ENCODE measurements at regions of chr20 and their contacts with region 1.

Region 1: DNA sequence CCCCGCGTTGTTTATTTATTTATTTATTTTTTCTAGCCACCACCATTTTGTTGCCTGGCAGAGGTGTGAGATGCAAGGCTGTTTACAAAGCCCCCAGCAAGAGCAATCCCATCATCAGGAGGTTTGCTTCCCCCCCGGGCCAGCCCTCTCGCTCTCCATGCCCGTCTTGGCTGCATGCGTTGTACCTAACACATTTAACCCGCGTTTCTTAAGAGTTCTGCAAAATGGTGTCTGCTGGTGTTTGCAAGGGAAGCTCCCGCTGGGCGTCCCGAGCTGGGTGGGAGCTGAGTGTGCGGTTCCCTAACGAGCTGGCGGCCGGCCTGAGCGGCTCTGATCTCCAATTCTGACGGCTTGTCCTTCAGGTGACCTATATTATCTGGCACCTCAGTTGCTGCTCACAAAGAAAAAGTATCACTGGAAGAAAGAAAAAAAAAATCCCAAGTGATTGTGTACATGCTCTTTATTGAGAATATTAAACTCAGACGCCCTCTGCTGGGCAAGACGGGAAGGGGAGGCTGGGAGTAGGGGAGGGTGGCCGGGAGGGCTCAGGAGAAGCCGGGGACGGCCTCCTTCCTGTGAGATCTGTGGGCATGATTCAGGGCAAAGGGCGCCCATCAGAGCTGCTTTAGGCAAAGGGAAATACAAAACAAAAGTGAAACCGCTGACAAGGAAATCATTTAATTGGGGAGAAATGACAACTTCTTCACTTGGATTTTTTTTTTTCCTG is 154.8 kb downstream of the BCAS1 start:
- DNase-seq: peak; percentile 91
- ATAC-seq: peak; percentile 94
- H3K4me3 ChIP-seq: peak overlapping the region; percentile 69 to 83 (median 74)
- H3K4me3 Mint-ChIP-seq: peak overlapping the region; percentile 94
- H3K27ac ChIP-seq: peak overlapping the region; percentile 45 to 68
- H3K27ac Mint-ChIP-seq: peak overlapping the region; percentile 90
- H3K4me1 ChIP-seq: peaks cover 17 to 38% of the 10 kb centered on the region in 2 donors
- H3K4me1 Mint-ChIP-seq: peaks cover 40% of the 10 kb centered on the region
- H3K27me3 ChIP-seq: no peaks in the 10 kb centered on the region
- H3K27me3 Mint-ChIP-seq: no peaks in the 10 kb centered on the region
- CTCF ChIP-seq: peak; percentile 86

Region 2: DNA sequence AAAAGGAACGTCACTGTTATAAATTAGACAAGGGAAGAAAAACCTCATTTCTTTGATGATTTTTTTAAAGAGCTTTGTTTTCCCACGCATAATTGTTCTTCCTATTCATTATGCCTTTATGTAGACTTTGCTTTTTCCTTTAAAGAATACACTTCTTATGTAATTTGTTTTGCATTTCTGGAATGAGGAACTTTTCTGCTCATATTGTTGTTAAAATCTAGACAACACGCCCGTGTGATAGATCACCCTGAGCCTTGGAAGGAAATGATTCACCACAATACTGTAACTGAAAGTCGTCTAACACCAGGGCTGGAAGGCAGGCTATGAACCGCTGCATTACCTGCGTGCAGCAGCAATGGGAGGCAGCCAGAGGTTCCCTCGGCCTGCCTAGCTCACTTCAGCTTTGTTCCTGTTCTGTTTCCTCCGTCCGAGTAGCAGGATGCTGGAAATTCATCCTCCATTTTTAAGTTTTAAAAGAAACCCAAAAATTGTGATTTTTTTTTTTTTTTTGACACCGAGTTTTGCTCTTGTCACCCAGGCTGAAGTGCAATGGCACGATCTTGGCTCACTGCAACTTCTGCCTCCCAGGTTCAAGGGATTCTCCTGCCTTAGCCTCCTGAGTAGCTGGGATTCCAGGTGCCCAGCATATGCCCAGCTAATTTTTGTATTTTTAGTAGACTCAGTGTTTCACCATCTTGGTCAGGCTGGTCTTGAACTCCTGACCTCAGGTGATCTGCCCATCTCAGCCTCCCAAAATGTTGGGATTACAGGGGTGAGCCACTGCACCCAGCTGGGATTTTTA is 272.4 kb before region 1 on chr20:
- CTCF ChIA-PET with region 1: interaction called, 10 read pairs
- POLR2A ChIA-PET with region 1: no interaction called
- intact Hi-C with region 1: no loop called
- DNase-seq: peak; percentile 74
- ATAC-seq: peak; percentile 90
- H3K4me3 ChIP-seq: peak overlapping the region in 4 of 5 experiments; percentile 0 to 43 (median 24)
- H3K4me3 Mint-ChIP-seq: peak overlapping the region; percentile 82
- H3K27ac ChIP-seq: peak overlapping the region; percentile 64 to 85
- H3K27ac Mint-ChIP-seq: peak overlapping the region; percentile 95
- H3K4me1 ChIP-seq: peaks cover 23 to 26% of the 10 kb centered on the region in 2 donors
- H3K4me1 Mint-ChIP-seq: peaks cover 31% of the 10 kb centered on the region
- H3K27me3 ChIP-seq: no peaks in the 10 kb centered on the region
- H3K27me3 Mint-ChIP-seq: no peaks in the 10 kb centered on the region
- CTCF ChIP-seq: no peak

Region 3: DNA sequence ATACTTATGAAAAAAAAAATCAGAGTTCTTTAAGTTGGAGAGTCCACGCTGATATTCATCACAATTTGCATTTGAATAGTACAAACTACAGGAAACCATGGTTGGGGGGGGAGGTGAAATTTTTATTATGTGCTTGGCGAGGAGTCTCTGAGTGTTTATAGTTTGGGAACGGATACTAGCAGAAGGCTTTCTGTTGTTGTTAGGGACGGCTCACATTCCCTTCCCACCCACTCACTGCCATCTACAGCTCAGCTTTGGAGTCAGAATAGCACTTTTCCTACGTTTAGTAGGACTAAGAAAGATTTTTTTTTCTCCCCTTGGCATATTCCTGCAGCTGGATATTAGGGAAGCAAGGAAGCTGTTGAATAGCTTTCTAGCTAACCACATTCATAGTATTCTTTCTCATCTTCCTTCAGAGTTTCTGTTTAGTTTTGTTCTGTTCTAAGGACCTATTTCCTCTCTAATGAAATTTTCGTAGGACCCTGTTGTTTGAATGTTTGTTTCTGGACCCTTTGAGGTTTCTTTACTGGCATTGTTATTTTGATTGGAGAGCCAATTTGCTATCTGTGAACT is 86.8 kb before region 1 on chr20:
- CTCF ChIA-PET with region 1: interaction called, 14 read pairs
- POLR2A ChIA-PET with region 1: interaction called, 3 read pairs
- intact Hi-C with region 1: loop called (anchors 10 kb)
- DNase-seq: peak; percentile 27
- ATAC-seq: no peak
- H3K4me3 ChIP-seq: peak overlapping the region; percentile 15 to 50 (median 24)
- H3K4me3 Mint-ChIP-seq: peak overlapping the region; percentile 88
- H3K27ac ChIP-seq: peak overlapping the region; percentile 83 to 93
- H3K27ac Mint-ChIP-seq: peak overlapping the region; percentile 98
- H3K4me1 ChIP-seq: peaks cover 53 to 61% of the 10 kb centered on the region in 2 donors
- H3K4me1 Mint-ChIP-seq: peaks cover 70% of the 10 kb centered on the region
- H3K27me3 ChIP-seq: no peaks in the 10 kb centered on the region
- H3K27me3 Mint-ChIP-seq: no peaks in the 10 kb centered on the region
- CTCF ChIP-seq: no peak

Region 4: GRCh38 chr20:53878578-53879363 is 36.8 kb before region 1 on chr20:
- CTCF ChIA-PET with region 1: interaction called, 12 read pairs
- POLR2A ChIA-PET with region 1: no interaction called
- intact Hi-C with region 1: loop called (anchors 1 kb)
- DNase-seq: no peak
- ATAC-seq: no peak
- H3K4me3 ChIP-seq: no peak overlapping the region
- H3K4me3 Mint-ChIP-seq: no peak overlapping the region
- H3K27ac ChIP-seq: no peak overlapping the region
- H3K27ac Mint-ChIP-seq: no peak overlapping the region
- H3K4me1 ChIP-seq: peaks cover 0 to 6% of the 10 kb centered on the region in 2 donors
- H3K4me1 Mint-ChIP-seq: peaks cover 3% of the 10 kb centered on the region
- H3K27me3 ChIP-seq: no peaks in the 10 kb centered on the region
- H3K27me3 Mint-ChIP-seq: no peaks in the 10 kb centered on the region
- CTCF ChIP-seq: no peak

Region 5: GRCh38 chr20:53926428-53927028 is 10.9 kb after region 1 on chr20:
- CTCF ChIA-PET with region 1: interaction called, 593 read pairs
- POLR2A ChIA-PET with region 1: interaction called, 11 read pairs
- intact Hi-C with region 1: loop called (anchors 1 kb)
- DNase-seq: peak; percentile 87
- ATAC-seq: peak; percentile 82
- H3K4me3 ChIP-seq: peak overlapping the region in 3 of 5 experiments; percentile 3 to 13 (median 10)
- H3K4me3 Mint-ChIP-seq: peak overlapping the region; percentile 88
- H3K27ac ChIP-seq: peak overlapping the region; percentile 75 to 83
- H3K27ac Mint-ChIP-seq: peak overlapping the region; percentile 98
- H3K4me1 ChIP-seq: peaks cover 74 to 79% of the 10 kb centered on the region in 2 donors
- H3K4me1 Mint-ChIP-seq: peaks cover 81% of the 10 kb centered on the region
- H3K27me3 ChIP-seq: no peaks in the 10 kb centered on the region
- H3K27me3 Mint-ChIP-seq: no peaks in the 10 kb centered on the region
- CTCF ChIP-seq: no peak